ENCODE measurements at regions of chr1 and their contacts with region 1.

Region 1: GRCh38 chr1:2412519-2413233 is at the start of gene PEX10:
- DNase-seq: peak; percentile 98 to 100
- ATAC-seq: peak; percentile 95
- H3K4me3 ChIP-seq: peak within 1 kb of the TSS; percentile 67 to 68
- H3K27ac ChIP-seq: peak within 1 kb of the TSS in 1 of 2 donors; percentile 53
- H3K4me1 ChIP-seq: no peaks in the 10 kb centered on the region
- H3K27me3 ChIP-seq: no peaks in the 10 kb centered on the region
- total RNA-seq, gene PEX10: 9.8 to 13.1 TPM

Region 2: DNA sequence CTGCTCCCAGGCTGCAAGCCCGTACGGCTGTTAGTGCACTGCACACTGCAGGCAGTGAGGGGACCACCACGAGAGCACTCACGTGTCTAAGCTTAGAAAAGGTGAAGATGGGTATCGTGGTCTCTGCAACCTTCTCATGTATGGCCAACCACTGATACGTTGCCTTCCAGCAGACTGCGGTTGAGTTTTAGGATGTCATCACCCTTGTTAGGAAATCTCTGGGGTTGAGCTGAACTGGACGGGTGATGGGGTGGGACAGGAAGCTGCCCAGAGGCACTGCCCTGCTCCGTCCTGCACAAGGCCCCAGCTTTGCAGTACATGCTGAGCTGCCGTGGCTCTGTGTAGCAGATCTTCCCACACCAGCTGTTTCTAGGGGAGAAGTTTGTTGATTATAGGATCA is 261.4 kb before region 1 on chr1:
- intact Hi-C with region 1: no loop called
- DNase-seq: peak in 1 of 2 donors; percentile 75
- ATAC-seq: no peak
- H3K4me3 ChIP-seq: no peak overlapping the region
- H3K27ac ChIP-seq: no peak overlapping the region
- H3K4me1 ChIP-seq: no peaks in the 10 kb centered on the region
- H3K27me3 ChIP-seq: no peaks in the 10 kb centered on the region

Region 3: DNA sequence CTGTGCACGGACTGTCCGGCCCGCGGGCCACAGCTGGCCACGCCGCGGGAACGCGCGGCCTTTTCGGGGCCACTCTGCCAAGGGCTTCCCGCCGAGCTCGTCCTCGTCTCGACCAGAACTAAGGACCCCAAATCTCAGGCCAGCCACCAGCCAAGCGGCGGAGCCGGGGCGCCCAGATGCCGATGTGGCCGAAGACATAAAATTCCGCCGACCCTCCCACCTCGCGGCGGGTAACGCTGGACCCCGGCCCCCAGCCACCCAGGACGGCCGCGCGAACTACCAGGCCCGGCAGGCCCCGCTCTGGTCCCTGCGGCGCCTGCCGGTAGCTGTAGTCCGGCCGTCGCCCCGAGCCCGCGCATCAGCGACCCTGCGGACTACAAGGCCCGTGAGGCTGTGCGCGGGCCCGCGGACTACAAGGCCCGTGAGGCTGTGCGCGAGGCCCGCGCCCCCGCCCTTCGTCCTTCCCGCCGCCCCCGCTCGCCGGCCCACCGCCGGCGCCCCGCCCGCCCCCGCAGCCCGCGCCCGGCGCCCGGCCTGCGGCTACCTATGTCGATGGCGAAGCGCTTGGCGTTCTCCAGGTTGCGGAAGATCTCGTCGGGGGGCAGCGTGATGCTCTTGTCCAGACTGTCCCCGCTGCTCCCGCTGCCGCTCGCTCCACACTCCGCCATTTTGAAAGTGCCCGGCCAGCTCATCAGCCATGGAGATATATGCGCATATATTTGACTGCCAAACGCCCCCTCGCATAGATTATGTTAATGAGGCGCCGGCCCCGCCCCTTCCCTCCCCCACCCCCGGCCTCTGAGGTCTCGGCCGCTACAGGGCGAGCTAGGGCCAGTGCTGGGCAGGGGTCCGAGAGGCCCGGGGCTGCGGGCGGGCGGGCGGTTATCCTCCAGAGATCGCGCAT is 113.5 kb after region 1 on chr1 and contains the start of gene PANK4:
- intact Hi-C with region 1: loop called in 1 of 2 experiments (anchors 5 kb)
- DNase-seq: peak; percentile 96
- ATAC-seq: peak; percentile 93
- H3K4me3 ChIP-seq: peak within 1 kb of the TSS; percentile 43 to 81
- H3K27ac ChIP-seq: peak within 1 kb of the TSS in 1 of 2 donors; percentile 35
- H3K4me1 ChIP-seq: no peaks in the 10 kb centered on the region
- H3K27me3 ChIP-seq: no peaks in the 10 kb centered on the region
- total RNA-seq, gene PANK4: 19.6 to 28.2 TPM

Region 4: GRCh38 chr1:2545759-2546514 is 133.3 kb after region 1 on chr1:
- intact Hi-C with region 1: loop called (anchors 1 to 2 kb)
- DNase-seq: peak; percentile 93 to 94
- ATAC-seq: peak; percentile 77
- H3K4me3 ChIP-seq: peak overlapping the region in 1 of 2 donors; percentile 43
- H3K27ac ChIP-seq: no peak overlapping the region
- H3K4me1 ChIP-seq: no peaks in the 10 kb centered on the region
- H3K27me3 ChIP-seq: no peaks in the 10 kb centered on the region

Region 5: DNA sequence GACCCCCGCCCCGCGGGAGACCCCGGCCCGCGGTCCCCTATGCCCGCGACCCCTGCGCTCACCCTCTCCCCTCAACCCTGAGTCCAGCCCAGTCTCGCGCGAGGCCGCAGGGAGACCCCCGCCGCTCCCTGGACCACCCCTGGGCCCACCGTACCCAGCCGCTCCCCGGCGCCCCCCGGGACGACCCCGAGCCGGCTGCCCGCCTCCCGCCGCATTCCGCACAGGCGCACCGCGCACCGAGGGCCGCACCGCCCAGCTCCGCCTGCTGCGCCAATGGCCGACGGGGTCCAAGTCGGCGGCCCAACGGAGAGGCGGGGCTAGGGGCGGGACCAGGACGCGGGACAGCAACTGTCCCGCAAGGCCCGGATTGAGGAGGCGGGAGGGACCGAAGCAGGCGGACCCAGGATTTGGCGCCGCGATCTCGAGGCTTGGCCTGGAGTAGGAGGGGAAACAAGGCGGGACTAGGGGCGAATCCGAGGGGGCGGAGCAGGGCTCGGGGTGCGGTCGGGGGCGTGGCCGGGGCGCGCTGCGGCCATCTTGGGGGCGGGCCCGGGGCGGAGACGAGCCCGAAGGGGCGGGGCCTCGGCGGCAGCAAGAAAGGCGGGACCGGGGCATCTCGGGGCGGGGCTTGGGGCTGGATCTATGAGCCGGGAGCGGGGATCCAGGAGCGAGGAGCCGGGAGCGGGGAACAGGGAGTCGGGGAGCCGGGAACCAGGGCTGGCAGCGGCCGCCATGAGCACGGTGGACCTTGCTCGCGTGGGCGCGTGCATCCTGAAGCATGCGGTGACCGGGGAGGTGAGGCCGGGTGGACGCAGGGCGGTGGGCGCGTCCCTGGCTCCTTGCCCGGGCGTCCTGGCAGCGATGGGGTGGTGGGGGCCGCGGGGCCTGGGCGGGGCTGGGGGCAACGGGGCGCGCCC is 173.7 kb after region 1 on chr1 and contains the start of gene PRXL2B:
- intact Hi-C with region 1: loop called in 1 of 2 experiments (anchors 1 kb)
- DNase-seq: peak; percentile 100
- ATAC-seq: peak; percentile 96
- H3K4me3 ChIP-seq: peak within 1 kb of the TSS; percentile 61 to 70
- H3K27ac ChIP-seq: peak within 1 kb of the TSS; percentile 45 to 53
- H3K4me1 ChIP-seq: no peaks in the 10 kb centered on the region
- H3K27me3 ChIP-seq: no peaks in the 10 kb centered on the region
- total RNA-seq, gene PRXL2B: 7.1 to 15.1 TPM

Region 6: DNA sequence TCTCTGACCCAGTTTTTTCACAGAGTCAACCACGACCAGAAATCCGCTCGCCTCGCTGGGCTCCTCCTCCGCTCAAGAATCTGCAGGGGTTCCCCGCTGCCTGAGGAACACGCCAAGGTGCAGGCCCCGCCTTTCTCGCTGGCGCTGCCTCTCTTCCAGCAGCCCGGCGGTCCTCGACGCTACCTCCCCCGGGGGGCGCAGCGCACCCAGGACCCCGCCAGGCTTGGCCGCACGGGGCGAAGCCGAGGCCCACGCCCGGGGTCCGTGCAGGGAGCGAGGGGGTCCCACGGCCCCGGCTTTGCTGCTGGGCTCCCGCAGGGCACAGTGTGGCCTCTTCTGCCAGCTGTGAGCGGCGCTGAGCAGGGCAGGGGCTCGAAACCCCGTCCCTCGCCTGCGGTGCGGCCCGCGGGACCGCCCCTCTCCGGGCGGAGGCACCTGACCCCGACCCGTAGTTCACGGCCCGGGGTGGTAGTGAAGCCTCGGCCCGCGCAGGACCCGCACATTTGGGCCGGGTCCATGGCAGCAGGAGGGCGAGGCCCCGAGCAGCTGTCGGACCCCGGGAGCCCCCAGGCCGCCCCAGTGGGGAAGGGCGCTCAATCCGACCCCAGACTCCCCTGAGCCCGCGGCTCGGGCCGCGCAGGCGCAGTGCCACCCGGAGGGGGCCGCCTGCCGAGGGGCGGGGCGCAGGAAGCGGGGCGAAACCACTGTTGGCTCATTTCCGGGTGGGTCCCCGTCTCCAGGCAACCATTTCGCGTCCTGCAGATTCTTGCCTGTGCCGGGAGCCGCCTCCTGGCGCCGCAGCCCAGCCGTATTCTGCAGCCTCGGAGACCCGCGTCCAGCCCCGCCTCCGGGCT is 230.1 kb after region 1 on chr1:
- intact Hi-C with region 1: loop called in 1 of 2 experiments (anchors 1 kb)
- DNase-seq: peak; percentile 95 to 97
- ATAC-seq: peak; percentile 89
- H3K4me3 ChIP-seq: peak overlapping the region; percentile 27 to 62
- H3K27ac ChIP-seq: no peak overlapping the region
- H3K4me1 ChIP-seq: no peaks in the 10 kb centered on the region
- H3K27me3 ChIP-seq: no peaks in the 10 kb centered on the region

Region 7: DNA sequence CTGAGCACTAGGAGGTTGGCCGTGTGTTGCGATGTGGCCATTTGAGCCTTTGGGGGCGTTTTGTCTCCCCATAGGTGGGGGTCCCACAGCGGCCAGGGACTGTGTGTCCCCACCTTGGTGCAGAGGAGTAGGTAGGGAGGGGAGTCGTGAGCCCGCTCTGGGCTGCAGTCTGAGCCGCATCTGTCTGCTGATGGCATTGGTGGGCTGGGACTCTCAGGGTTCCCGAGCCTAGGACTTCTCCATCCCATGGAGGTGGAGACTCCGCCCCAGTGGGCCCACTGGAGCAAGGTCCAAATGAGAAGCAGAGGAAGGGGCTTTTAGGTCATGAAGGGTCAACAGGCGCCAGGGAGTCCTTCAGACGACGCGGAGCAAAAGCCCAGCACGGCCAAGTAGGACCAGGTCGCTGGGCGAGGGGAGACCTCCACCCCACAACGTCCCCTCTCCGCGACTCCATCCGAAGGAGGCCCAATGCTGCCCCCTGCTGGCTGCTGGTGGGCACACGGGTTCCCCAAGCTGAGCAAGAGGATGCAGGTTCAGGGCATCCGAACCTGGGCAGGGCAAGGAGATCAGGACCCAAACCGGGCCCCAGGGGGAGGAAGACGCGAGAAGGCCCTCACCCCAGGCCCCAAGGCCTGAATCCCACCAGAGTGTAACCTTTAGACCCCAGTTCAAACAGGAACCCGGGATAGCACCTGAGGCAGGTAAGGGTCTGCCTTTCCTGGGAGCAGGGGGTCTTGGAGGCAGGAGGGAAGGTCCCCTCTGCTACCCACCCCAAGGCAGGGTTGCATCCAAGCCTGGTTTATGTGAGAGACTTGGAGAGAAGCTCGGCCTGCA is 373.9 kb after region 1 on chr1:
- intact Hi-C with region 1: loop called (anchors 1 to 5 kb)
- DNase-seq: peak; percentile 74 to 88
- ATAC-seq: no peak
- H3K4me3 ChIP-seq: no peak overlapping the region
- H3K27ac ChIP-seq: no peak overlapping the region
- H3K4me1 ChIP-seq: no peaks in the 10 kb centered on the region
- H3K27me3 ChIP-seq: peaks cover 0 to 1% of the 10 kb centered on the region in 2 donors

Measured in aorta (tissue), 5 donors.